GM18951 (cell line): ENCODE measurements at regions of chr11 and their contacts with region 1.

Region 1: DNA sequence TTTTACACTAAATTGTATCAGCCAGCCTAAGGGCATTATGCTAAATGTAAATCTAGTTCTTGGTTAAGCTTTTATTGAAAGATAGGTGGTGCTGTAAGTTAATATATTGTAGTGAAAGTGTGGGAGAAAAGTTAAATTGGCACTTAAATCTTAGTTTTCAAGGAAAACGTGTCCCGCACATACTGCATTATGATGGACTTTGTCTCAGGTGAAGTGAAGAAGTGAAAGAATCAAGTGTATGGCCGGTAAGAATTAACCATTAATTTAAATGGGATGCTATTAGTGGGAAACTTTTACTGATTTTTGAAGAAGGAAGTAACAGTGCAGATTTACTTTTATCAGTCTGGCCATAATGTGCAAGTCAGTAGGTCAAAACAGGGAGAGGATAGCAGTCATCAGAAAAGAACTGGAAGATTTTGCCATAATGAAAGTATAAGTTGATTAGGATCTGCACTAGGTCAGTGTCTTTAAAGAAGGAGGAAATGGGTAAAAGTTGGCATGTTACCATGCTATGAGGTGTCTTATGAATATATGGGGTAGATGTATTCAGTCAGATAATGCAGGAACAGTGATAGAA is 81.6 kb downstream of the PDHX start:
- POLR2A ChIP-seq: no peak

Region 2: GRCh38 chr11:34068111-34068510 is 929.9 kb before region 1 on chr11:
- in situ Hi-C with region 1: no loop called
- POLR2A ChIP-seq: no peak

Region 3: DNA sequence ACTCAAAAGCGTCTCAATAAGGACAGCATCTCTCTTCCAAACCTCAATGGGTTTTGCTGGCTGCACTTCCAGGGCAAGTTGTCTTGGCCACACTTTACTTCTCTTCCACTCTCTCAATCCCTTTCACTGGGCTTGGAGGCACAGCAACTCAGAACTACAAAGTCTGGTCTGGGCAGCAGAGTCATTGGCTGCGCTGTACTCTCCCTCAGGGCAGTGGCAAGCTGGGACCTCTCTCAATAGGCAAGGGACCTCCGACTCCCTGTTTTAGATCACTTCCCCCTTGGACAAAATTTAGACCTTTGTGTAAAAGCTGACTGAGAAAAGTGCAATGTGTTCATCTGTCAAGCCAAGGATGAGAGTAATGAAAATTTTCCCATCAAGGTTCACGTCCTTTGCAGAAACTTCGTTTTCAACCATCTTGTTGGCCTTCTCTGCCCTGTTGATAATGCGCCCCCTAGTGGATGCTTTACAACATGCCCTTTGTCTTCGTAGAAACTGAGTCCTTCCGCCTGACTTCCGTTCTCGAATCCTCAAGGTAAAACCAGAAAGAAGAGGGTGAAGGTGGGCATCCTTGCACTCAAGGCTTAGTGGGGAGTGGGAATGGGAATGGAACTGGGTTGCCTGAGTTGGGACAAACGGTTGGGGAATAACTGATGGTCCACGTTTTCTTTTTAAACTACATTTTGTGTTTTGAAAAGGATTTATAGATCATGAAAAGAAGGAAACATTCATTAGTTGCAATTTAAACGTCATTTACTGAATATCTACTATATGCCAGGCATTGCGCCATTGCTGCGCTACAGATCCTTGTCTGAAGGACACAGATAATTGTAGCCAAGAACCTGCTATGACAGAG is 240.0 kb after region 1 on chr11:
- in situ Hi-C with region 1: loop called (anchors 10 kb)
- POLR2A ChIP-seq: no peak

Region 4: DNA sequence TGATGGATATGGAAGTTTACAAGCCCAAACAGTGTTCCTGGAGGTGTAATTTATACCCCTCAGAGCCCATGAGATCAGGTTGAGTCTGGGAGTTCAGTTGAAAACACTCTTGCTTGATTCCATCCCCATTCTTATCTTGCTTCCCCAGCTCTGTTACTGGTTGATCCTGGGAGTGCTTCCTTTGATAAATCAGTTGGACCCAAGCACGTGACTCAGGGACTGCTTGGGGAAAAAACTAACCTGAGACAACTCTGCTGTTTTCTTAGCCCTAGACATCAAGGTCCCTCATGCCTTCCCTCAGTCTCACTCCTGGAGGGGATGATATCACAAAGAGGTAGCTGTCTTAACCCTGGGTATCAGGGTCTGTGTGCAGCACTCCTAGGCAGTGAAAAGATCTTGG is 456.3 kb after region 1 on chr11:
- in situ Hi-C with region 1: no loop called
- POLR2A ChIP-seq: no peak